Endothelial cell of umbilical vein (primary cell): ENCODE measurements at regions of chr6 and their contacts with region 1.

Region 1: GRCh38 chr6:136643850-136644596 is 93.8 kb upstream of the MAP7 start:
- DNase-seq: peak; percentile 88
- H3K4me3 ChIP-seq: no peak overlapping the region
- H3K27ac ChIP-seq: no peak overlapping the region
- H3K4me1 ChIP-seq: peaks cover 12% of the 10 kb centered on the region
- H3K27me3 ChIP-seq: no peaks in the 10 kb centered on the region
- CTCF ChIP-seq: peak; percentile 85 to 88
- POLR2A ChIP-seq: no peak

Region 2: GRCh38 chr6:136593748-136594490 is 50.1 kb before region 1 on chr6:
- CTCF ChIA-PET with region 1: interaction called, 17 read pairs
- POLR2A ChIA-PET with region 1: no interaction called
- dilution Hi-C with region 1: no loop called
- intact Hi-C with region 1: no loop called
- DNase-seq: peak; percentile 97
- H3K4me3 ChIP-seq: peak overlapping the region in 1 of 3 experiments; percentile 31
- H3K27ac ChIP-seq: peak overlapping the region; percentile 88
- H3K4me1 ChIP-seq: peaks cover 20% of the 10 kb centered on the region
- H3K27me3 ChIP-seq: no peaks in the 10 kb centered on the region
- CTCF ChIP-seq: no peak
- POLR2A ChIP-seq: no peak

Region 3: DNA sequence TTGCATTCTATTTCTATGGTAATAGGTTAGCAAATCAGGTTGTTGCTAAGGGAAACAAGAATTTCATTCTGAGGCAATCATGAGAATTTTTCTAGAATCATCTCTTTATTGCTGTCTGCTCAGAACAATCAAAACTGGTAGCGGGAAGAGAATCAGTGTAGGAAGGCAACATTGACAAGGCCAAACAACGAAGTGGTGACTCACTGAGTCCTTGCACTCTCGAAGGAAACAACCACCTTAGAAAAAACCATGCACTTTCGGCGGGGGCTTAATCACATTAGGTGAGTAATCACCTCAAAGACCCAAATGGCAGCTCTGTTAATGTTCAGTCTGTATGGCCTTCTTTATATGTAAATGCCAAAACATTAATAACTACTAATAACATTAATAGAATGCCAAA is 15.0 kb before region 1 on chr6:
- CTCF ChIA-PET with region 1: interaction called, 21 read pairs
- POLR2A ChIA-PET with region 1: no interaction called
- dilution Hi-C with region 1: no loop called
- intact Hi-C with region 1: no loop called
- DNase-seq: peak; percentile 36
- H3K4me3 ChIP-seq: no peak overlapping the region
- H3K27ac ChIP-seq: no peak overlapping the region
- H3K4me1 ChIP-seq: no peaks in the 10 kb centered on the region
- H3K27me3 ChIP-seq: no peaks in the 10 kb centered on the region
- CTCF ChIP-seq: no peak
- POLR2A ChIP-seq: no peak

Region 4: GRCh38 chr6:136723780-136724179 is 79.8 kb after region 1 on chr6:
- CTCF ChIA-PET with region 1: interaction called, 35 read pairs
- POLR2A ChIA-PET with region 1: no interaction called
- dilution Hi-C with region 1: no loop called
- intact Hi-C with region 1: no loop called
- DNase-seq: peak; percentile 67
- H3K4me3 ChIP-seq: no peak overlapping the region
- H3K27ac ChIP-seq: no peak overlapping the region
- H3K4me1 ChIP-seq: no peaks in the 10 kb centered on the region
- H3K27me3 ChIP-seq: no peaks in the 10 kb centered on the region
- CTCF ChIP-seq: no peak
- POLR2A ChIP-seq: no peak

Region 5: GRCh38 chr6:136822376-136823127 is 178.5 kb after region 1 on chr6 and contains the start of gene PEX7:
- CTCF ChIA-PET with region 1: interaction called, 6 read pairs
- POLR2A ChIA-PET with region 1: interaction called, 4 read pairs
- dilution Hi-C with region 1: no loop called
- intact Hi-C with region 1: loop called (anchors 1 kb)
- DNase-seq: peak; percentile 92
- H3K4me3 ChIP-seq: peak within 1 kb of the TSS; percentile 35 to 89 (median 65)
- H3K27ac ChIP-seq: peak within 1 kb of the TSS; percentile 52
- H3K4me1 ChIP-seq: peaks cover 10% of the 10 kb centered on the region
- H3K27me3 ChIP-seq: no peaks in the 10 kb centered on the region
- CTCF ChIP-seq: peak; percentile 67 to 86
- POLR2A ChIP-seq: peak; percentile 73
- total RNA-seq, gene PEX7: 3.5 and 3.7 TPM in 2 replicates

Region 6: GRCh38 chr6:136927292-136927691 is 283.3 kb after region 1 on chr6:
- CTCF ChIA-PET with region 1: interaction called, 13 read pairs
- POLR2A ChIA-PET with region 1: no interaction called
- dilution Hi-C with region 1: no loop called
- intact Hi-C with region 1: loop called (anchors 1 kb)
- DNase-seq: peak; percentile 17
- H3K4me3 ChIP-seq: no peak overlapping the region
- H3K27ac ChIP-seq: no peak overlapping the region
- H3K4me1 ChIP-seq: peaks cover 6% of the 10 kb centered on the region
- H3K27me3 ChIP-seq: peaks cover 18 to 32% of the 10 kb centered on the region in 2 experiments
- CTCF ChIP-seq: peak in 1 of 2 donors; percentile 39
- POLR2A ChIP-seq: no peak

Region 7: DNA sequence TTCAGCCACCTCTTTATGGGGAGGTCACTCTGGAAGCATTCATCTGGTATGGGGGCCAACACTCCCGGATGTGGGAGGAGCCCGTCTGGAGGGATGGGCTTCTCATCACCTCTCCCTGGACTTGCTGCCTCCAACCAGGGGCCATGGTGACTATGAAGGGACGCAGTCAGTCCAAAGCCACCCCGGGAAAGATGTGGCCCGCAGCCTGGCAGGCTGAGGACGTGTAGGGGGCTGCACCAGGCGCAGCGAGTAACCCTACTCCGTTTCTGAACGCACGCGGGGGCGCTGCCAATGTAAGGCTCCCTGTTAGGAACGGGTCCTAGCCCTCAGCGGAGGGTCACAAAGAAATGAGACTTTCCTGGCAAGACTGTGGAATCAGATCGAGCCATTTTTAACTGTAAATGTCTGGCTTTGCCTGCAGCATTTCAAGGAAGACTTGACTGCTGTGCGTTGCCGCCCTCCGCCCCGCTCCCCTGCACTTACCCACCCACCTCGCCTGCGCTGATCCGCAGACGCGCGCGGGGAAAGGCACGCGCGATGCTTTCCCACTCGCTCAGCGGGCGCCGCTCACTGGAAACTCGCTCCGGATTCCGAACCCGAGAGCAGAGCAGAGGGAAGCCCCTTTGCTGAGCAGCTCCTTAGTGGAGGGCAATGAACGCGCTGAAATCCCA is 345.7 kb after region 1 on chr6:
- CTCF ChIA-PET with region 1: no interaction called
- POLR2A ChIA-PET with region 1: no interaction called
- dilution Hi-C with region 1: no loop called
- intact Hi-C with region 1: no loop called
- DNase-seq: no peak
- H3K4me3 ChIP-seq: no peak overlapping the region
- H3K27ac ChIP-seq: no peak overlapping the region
- H3K4me1 ChIP-seq: peaks cover 3% of the 10 kb centered on the region
- H3K27me3 ChIP-seq: peaks cover 25 to 44% of the 10 kb centered on the region in 2 experiments
- CTCF ChIP-seq: no peak
- POLR2A ChIP-seq: no peak